ENCODE measurements at regions of chr1 and their contacts with region 1.

Region 1: DNA sequence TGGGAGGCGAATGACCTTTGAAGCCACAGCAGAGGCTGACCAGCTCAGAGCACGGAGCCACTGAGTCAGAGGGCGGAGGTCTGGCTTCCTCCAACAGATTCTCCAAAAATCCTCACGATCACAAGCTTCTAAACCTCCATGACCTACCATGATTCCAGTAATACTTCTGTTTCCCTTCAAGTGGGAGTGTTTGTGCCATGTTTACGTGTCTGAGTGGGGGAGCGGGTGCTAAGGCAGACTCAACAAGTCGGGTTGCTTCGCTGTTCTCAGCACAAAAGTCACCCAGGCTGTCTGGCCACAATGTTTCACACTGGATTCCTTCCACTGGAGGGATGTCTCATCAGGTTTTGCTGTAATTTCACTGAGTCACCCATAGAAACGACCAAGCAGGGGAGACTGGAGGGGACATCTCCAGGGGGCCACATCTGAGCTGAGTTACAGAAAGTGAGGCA is 86.2 kb downstream of the SLC66A1 start:
- DNase-seq: peak; percentile 68 to 79 (median 77)
- H3K4me3 ChIP-seq: no peak overlapping the region
- H3K27ac ChIP-seq: peak overlapping the region; percentile 8 to 77
- H3K4me1 ChIP-seq: peaks cover 55% of the 10 kb centered on the region
- H3K27me3 ChIP-seq: no peaks in the 10 kb centered on the region
- CTCF ChIP-seq: peak in 2 of 3 donors; percentile 59 to 71
- EP300 ChIP-seq: no peak
- POLR2A ChIP-seq: no peak

Region 2: DNA sequence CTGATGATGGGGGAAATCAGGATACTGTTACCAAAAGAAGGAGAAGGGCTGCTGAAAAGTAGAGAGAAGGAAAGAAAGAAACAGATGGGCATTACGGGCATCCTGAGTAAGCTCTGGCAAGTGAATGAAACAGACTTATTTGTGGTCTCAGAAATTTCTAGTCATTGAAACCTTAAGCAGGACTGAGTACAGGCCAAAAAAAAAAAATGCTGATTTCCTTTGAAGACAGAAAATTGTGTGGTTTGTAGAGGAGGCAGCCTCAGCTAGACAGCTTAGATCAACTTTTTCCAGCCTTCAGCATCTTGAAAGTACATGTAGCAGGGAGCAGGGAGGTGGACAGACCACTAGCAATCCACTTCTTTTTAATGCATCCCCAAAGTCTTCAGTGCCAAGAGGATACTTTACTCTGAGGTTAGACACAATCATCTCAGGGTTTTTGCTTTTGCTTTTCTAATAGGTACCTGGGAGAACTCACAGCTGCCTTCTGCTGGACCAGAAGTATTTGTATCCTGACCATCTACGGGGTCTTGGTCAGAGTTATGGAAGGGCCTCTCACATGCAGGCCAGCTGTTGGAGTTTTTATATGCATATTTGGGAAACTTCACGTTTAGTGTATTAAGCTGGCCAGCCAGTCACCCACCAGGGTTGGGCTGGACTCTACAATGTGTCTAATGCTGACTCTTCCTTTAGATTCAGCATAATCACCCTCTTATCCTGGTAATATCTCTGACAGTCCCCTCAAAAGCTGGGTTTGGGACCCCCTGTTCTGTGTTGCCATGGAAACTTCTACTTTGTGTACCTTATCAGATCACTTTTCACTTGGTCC is 97.7 kb after region 1 on chr1:
- intact Hi-C with region 1: loop called in 2 of 4 experiments (anchors 5 to 10 kb)
- DNase-seq: peak in 1 of 5 donors; percentile 26
- H3K4me3 ChIP-seq: no peak overlapping the region
- H3K27ac ChIP-seq: peak overlapping the region; percentile 71 to 80
- H3K4me1 ChIP-seq: peaks cover 15% of the 10 kb centered on the region
- H3K27me3 ChIP-seq: no peaks in the 10 kb centered on the region
- CTCF ChIP-seq: no peak
- EP300 ChIP-seq: no peak
- POLR2A ChIP-seq: no peak

Region 3: GRCh38 chr1:19504796-19505692 is 106.7 kb after region 1 on chr1:
- intact Hi-C with region 1: loop called in 1 of 4 experiments (anchors 5 kb)
- DNase-seq: peak in 4 of 5 donors; percentile 58 to 83 (median 68)
- H3K4me3 ChIP-seq: no peak overlapping the region
- H3K27ac ChIP-seq: peak overlapping the region in 1 of 2 donors; percentile 83
- H3K4me1 ChIP-seq: peaks cover 9% of the 10 kb centered on the region
- H3K27me3 ChIP-seq: no peaks in the 10 kb centered on the region
- CTCF ChIP-seq: no peak
- EP300 ChIP-seq: peak; percentile 76
- POLR2A ChIP-seq: no peak

Measured in ovary (tissue), 10 donors.